H1 (cell line): ENCODE measurements at regions of chr12 and their contacts with region 1.

Region 1: DNA sequence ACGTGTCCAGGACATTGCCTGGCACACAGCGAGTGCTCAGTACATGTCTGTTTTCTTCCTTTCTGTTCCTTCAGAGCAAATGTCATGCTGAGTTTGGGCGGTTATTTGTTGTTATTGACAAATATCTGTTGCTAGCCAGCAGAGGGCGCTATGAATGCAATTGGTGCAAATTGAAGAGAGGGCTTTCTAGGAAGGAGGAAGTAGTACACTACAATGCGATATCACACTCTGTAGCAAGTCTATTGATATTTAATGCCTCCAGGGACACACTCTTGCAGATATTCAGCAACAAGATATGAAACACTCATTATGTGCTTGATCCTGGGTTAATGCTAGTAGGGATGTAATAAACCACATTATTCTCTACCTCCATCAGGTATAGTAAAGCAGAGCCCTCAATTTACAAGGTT is 267.3 kb upstream of the SRRM4 start:
- DNase-seq: peak; percentile 10 to 74
- H3K4me3 ChIP-seq: no peak overlapping the region
- H3K27ac ChIP-seq: no peak overlapping the region
- H3K4me1 ChIP-seq: no peaks in the 10 kb centered on the region; a peak in 1 of 7 replicates
- H3K27me3 ChIP-seq: no peaks in the 10 kb centered on the region
- CTCF ChIP-seq: peak in 2 of 3 experiments; percentile 78 to 82; a peak in 3 of 4 replicates
- EP300 ChIP-seq: no peak
- POLR2A ChIP-seq: no peak
- RAD21 ChIP-seq: peak; percentile 77 to 87

Region 2: DNA sequence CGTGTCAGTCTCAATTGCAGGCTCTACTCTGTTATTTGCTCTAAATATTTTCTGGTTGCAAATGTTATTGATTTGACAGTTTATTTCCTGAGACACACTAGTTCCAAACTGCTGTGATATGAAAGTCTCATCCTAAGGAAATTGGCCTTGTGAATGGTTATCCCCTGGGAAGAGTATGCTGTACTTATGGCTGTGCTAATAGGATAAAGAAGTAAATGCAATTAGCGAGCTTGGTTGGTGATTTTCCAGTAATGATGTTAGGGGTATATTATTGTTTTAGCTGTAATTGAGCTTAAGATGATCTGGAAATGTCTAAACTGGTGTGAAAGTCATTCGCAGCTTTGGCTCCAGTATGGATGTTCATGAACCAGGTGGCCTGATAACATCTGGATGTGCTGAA is 139.8 kb before region 1 on chr12:
- CTCF ChIA-PET with region 1: no interaction called
- POLR2A ChIA-PET with region 1: no interaction called
- DNase-seq: no peak
- H3K4me3 ChIP-seq: no peak overlapping the region
- H3K27ac ChIP-seq: no peak overlapping the region
- H3K4me1 ChIP-seq: no peaks in the 10 kb centered on the region
- H3K27me3 ChIP-seq: no peaks in the 10 kb centered on the region
- CTCF ChIP-seq: no peak
- EP300 ChIP-seq: no peak
- POLR2A ChIP-seq: no peak
- RAD21 ChIP-seq: no peak

Region 3: GRCh38 chr12:118727196-118727978 is 13.3 kb after region 1 on chr12:
- CTCF ChIA-PET with region 1: interaction called, 11 read pairs
- POLR2A ChIA-PET with region 1: no interaction called
- DNase-seq: no peak
- H3K4me3 ChIP-seq: no peak overlapping the region
- H3K27ac ChIP-seq: no peak overlapping the region
- H3K4me1 ChIP-seq: no peaks in the 10 kb centered on the region
- H3K27me3 ChIP-seq: no peaks in the 10 kb centered on the region
- CTCF ChIP-seq: no peak
- EP300 ChIP-seq: no peak
- POLR2A ChIP-seq: no peak
- RAD21 ChIP-seq: no peak

Region 4: GRCh38 chr12:118748478-118749380 is 34.7 kb after region 1 on chr12:
- CTCF ChIA-PET with region 1: no interaction called
- POLR2A ChIA-PET with region 1: no interaction called
- DNase-seq: no peak
- H3K4me3 ChIP-seq: no peak overlapping the region
- H3K27ac ChIP-seq: no peak overlapping the region
- H3K4me1 ChIP-seq: peaks cover 0 to 7% (median 3%) of the 10 kb centered on the region in 4 experiments; a peak in 3 of 7 replicates
- H3K27me3 ChIP-seq: no peaks in the 10 kb centered on the region
- CTCF ChIP-seq: no peak
- EP300 ChIP-seq: no peak
- POLR2A ChIP-seq: no peak
- RAD21 ChIP-seq: no peak

Region 5: GRCh38 chr12:118780939-118781338 is 66.9 kb after region 1 on chr12:
- CTCF ChIA-PET with region 1: interaction called, 10 read pairs
- POLR2A ChIA-PET with region 1: no interaction called
- DNase-seq: no peak
- H3K4me3 ChIP-seq: no peak overlapping the region
- H3K27ac ChIP-seq: no peak overlapping the region
- H3K4me1 ChIP-seq: peaks cover 0 to 5% (median 5%) of the 10 kb centered on the region in 4 experiments; a peak in 3 of 7 replicates
- H3K27me3 ChIP-seq: peaks cover 0 to 2% (median under 1%) of the 10 kb centered on the region in 4 experiments; a peak in 3 of 7 replicates
- CTCF ChIP-seq: no peak
- EP300 ChIP-seq: no peak
- POLR2A ChIP-seq: no peak
- RAD21 ChIP-seq: no peak

Region 6: GRCh38 chr12:118840399-118840798 is 126.3 kb after region 1 on chr12:
- CTCF ChIA-PET with region 1: interaction called, 24 read pairs
- POLR2A ChIA-PET with region 1: no interaction called
- DNase-seq: no peak
- H3K4me3 ChIP-seq: no peak overlapping the region
- H3K27ac ChIP-seq: no peak overlapping the region
- H3K4me1 ChIP-seq: no peaks in the 10 kb centered on the region
- H3K27me3 ChIP-seq: peaks cover 0 to 2% (median 0%) of the 10 kb centered on the region in 4 experiments; a peak in 2 of 7 replicates
- CTCF ChIP-seq: peak in 2 of 3 experiments; percentile 78 to 93; a peak in 3 of 4 replicates
- EP300 ChIP-seq: no peak
- POLR2A ChIP-seq: no peak
- RAD21 ChIP-seq: peak; percentile 82 to 91